Activated CD4-positive, alpha-beta T cell treated with anti-CD3 and anti-CD28 coated beads for 36 hours (primary cell): ENCODE measurements at regions of chr3 and their contacts with region 1.

Region 1: GRCh38 chr3:194134757-194135528 is 1.0 kb upstream of the HES1 start:
- DNase-seq: peak; percentile 92
- ATAC-seq: peak; percentile 67
- H3K4me3 Mint-ChIP-seq: peak overlapping the region; percentile 72
- H3K27ac Mint-ChIP-seq: peak overlapping the region; percentile 39
- H3K4me1 Mint-ChIP-seq: peaks cover 45% of the 10 kb centered on the region
- H3K27me3 Mint-ChIP-seq: peaks cover 60% of the 10 kb centered on the region

Region 2: GRCh38 chr3:193673845-193674244 is 461.1 kb before region 1 on chr3:
- CTCF ChIA-PET with region 1: no interaction called
- POLR2A ChIA-PET with region 1: no interaction called
- intact Hi-C with region 1: loop called in 1 of 2 experiments (anchors 10 kb)
- DNase-seq: no peak
- ATAC-seq: no peak
- H3K4me3 Mint-ChIP-seq: no peak overlapping the region
- H3K27ac Mint-ChIP-seq: no peak overlapping the region
- H3K4me1 Mint-ChIP-seq: peaks cover 9% of the 10 kb centered on the region
- H3K27me3 Mint-ChIP-seq: no peaks in the 10 kb centered on the region

Region 3: GRCh38 chr3:193960487-193961274 is 174.3 kb before region 1 on chr3:
- CTCF ChIA-PET with region 1: interaction called, 3 read pairs
- POLR2A ChIA-PET with region 1: no interaction called
- intact Hi-C with region 1: loop called in 1 of 2 experiments (anchors 2 kb)
- DNase-seq: no peak
- ATAC-seq: no peak
- H3K4me3 Mint-ChIP-seq: no peak overlapping the region
- H3K27ac Mint-ChIP-seq: no peak overlapping the region
- H3K4me1 Mint-ChIP-seq: peaks cover 20% of the 10 kb centered on the region
- H3K27me3 Mint-ChIP-seq: peaks cover 36% of the 10 kb centered on the region

Region 4: GRCh38 chr3:194204042-194204987 is 69.4 kb after region 1 on chr3:
- CTCF ChIA-PET with region 1: no interaction called
- POLR2A ChIA-PET with region 1: no interaction called
- intact Hi-C with region 1: loop called (anchors 2 to 5 kb)
- DNase-seq: peak; percentile 50
- ATAC-seq: peak; percentile 49
- H3K4me3 Mint-ChIP-seq: peak overlapping the region; percentile 68
- H3K27ac Mint-ChIP-seq: peak overlapping the region; percentile 64
- H3K4me1 Mint-ChIP-seq: peaks cover 28% of the 10 kb centered on the region
- H3K27me3 Mint-ChIP-seq: peaks cover 19% of the 10 kb centered on the region

Region 5: GRCh38 chr3:194395778-194396547 is 261.0 kb after region 1 on chr3:
- CTCF ChIA-PET with region 1: no interaction called
- POLR2A ChIA-PET with region 1: no interaction called
- intact Hi-C with region 1: loop called (anchors 5 kb)
- DNase-seq: peak; percentile 79
- ATAC-seq: peak; percentile 73
- H3K4me3 Mint-ChIP-seq: peak overlapping the region; percentile 60
- H3K27ac Mint-ChIP-seq: peak overlapping the region; percentile 73
- H3K4me1 Mint-ChIP-seq: peaks cover 55% of the 10 kb centered on the region
- H3K27me3 Mint-ChIP-seq: peaks cover 12% of the 10 kb centered on the region